Vagina (tissue), 2 donors: ENCODE measurements at regions of chr3 and their contacts with region 1.

Region 1: DNA sequence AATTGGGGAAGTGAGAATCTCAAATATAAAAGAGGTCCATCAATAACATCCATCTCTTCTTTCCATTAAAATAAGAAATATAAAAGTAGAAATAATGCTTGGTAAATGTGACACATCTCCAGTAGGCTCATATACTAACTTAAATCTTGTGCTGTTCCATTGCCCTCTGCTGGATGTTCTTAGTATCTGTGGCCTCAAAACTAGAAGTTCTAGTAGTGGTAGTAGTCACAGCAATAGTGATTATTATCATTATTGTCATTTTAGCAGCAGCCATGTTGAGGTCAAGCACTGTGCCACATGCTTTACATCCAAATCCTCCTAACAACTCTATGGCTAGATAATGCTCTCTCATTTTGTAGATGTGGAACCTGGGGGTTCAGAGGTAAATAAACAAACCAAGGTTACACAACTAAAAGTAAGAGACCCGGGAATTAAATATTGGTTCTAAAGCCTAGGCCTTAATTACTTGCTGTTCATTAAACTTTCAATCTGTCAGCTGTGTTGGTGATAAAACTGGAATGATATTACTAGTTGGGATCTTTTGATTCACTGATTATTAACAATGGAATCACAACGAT is 20.2 kb upstream of the BTLA start:
- DNase-seq: no peak
- H3K4me3 ChIP-seq: no peak overlapping the region
- H3K27ac ChIP-seq: no peak overlapping the region
- H3K4me1 ChIP-seq: no peaks in the 10 kb centered on the region
- H3K27me3 ChIP-seq: no peaks in the 10 kb centered on the region
- CTCF ChIP-seq: peak; percentile 51 to 70 (median 66)
- POLR2A ChIP-seq: no peak

Region 2: GRCh38 chr3:112293368-112294321 is 225.9 kb before region 1 on chr3 and contains the start of gene SLC9C1:
- intact Hi-C with region 1: loop called (anchors 10 kb)
- DNase-seq: no peak
- H3K4me3 ChIP-seq: peak within 1 kb of the TSS; percentile 40 to 42
- H3K27ac ChIP-seq: peak within 1 kb of the TSS; percentile 72
- H3K4me1 ChIP-seq: no peaks in the 10 kb centered on the region
- H3K27me3 ChIP-seq: no peaks in the 10 kb centered on the region
- CTCF ChIP-seq: peak; percentile 33 to 49 (median 42)
- POLR2A ChIP-seq: no peak
- total RNA-seq, gene SLC9C1: not detected

Region 3: DNA sequence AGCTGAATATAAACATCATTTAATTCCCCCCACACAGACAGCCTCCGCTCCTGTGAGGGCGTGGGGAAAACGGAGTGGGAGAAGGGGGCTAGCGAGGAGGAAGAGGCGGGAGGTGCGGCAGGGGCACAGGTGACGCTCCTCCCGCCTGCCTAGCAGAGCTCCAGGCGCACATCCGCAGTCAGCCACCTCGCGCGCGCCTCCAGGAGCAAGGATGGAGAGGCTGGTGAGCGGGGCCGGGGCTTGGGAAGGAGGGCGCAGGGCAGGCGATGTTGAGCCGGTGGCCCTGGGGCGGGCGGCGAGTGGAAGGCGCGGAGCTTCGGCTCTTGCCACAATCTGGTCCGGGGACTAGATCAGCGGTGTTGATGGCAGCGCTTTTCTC is 186.5 kb before region 1 on chr3 and contains the start of gene CD200:
- intact Hi-C with region 1: loop called (anchors 10 kb)
- DNase-seq: no peak
- H3K4me3 ChIP-seq: peak within 1 kb of the TSS; percentile 47 to 65
- H3K27ac ChIP-seq: peak within 1 kb of the TSS; percentile 86
- H3K4me1 ChIP-seq: peaks cover 18% of the 10 kb centered on the region
- H3K27me3 ChIP-seq: no peaks in the 10 kb centered on the region
- CTCF ChIP-seq: no peak
- POLR2A ChIP-seq: no peak
- total RNA-seq, gene CD200: 3.9 TPM

Region 4: DNA sequence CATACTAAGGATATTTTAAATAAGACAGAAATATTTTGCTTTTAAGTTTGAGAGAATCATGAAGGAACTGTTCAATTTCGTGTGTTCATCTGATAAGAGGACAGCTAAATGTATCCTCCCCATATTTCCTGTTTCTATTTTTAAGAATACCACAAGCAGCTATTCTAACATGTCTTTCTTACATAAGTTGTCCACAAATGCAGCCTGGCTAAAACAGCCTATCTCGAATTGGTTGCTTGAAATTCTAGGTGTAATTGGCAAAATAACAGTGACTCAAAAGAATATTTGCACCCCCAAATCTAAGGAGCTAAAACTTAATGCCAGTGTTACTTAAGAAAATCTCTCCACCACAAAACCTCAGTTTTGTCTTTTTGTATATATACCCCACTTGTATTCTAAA is 55.2 kb before region 1 on chr3:
- intact Hi-C with region 1: loop called (anchors 5 kb)
- DNase-seq: no peak
- H3K4me3 ChIP-seq: no peak overlapping the region
- H3K27ac ChIP-seq: no peak overlapping the region
- H3K4me1 ChIP-seq: no peaks in the 10 kb centered on the region
- H3K27me3 ChIP-seq: no peaks in the 10 kb centered on the region
- CTCF ChIP-seq: no peak
- POLR2A ChIP-seq: no peak

Region 5: GRCh38 chr3:112477891-112478290 is 41.6 kb before region 1 on chr3:
- intact Hi-C with region 1: no loop called
- DNase-seq: no peak
- H3K4me3 ChIP-seq: no peak overlapping the region
- H3K27ac ChIP-seq: no peak overlapping the region
- H3K4me1 ChIP-seq: no peaks in the 10 kb centered on the region
- H3K27me3 ChIP-seq: no peaks in the 10 kb centered on the region
- CTCF ChIP-seq: no peak
- POLR2A ChIP-seq: no peak